Pancreas (tissue), 10 donors: ENCODE measurements at regions of chr1 and their contacts with region 1.

Region 1: DNA sequence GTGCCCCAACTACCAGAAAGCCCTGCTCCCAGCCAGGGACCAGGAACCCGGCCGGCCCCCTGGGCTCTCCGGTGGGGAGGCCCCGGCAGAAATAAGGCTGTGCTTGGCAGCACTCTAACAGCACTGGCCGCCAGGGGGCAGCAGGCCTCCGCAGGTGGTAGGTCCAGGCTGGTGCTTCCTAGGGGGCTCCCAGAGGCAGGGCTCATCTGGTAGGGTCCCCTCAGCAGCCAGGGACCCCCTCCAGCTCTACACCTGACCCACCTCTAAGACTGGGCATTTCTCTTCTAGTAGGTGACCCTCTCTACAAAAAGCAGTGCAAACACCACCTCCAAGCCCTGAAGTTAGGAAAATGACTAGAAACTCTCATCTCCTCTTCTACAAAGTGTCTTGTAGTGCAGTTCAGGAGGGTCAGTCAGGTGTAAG is 85.6 kb downstream of the STUM start:
- DNase-seq: peak; percentile 52 to 95 (median 77)
- ATAC-seq: peak; percentile 81 to 93 (median 90)
- H3K4me3 ChIP-seq: no peak overlapping the region
- H3K27ac ChIP-seq: no peak overlapping the region
- H3K4me1 ChIP-seq: no peaks in the 10 kb centered on the region
- H3K27me3 ChIP-seq: no peaks in the 10 kb centered on the region
- CTCF ChIP-seq: peak; percentile 86 to 91 (median 90)

Region 2: DNA sequence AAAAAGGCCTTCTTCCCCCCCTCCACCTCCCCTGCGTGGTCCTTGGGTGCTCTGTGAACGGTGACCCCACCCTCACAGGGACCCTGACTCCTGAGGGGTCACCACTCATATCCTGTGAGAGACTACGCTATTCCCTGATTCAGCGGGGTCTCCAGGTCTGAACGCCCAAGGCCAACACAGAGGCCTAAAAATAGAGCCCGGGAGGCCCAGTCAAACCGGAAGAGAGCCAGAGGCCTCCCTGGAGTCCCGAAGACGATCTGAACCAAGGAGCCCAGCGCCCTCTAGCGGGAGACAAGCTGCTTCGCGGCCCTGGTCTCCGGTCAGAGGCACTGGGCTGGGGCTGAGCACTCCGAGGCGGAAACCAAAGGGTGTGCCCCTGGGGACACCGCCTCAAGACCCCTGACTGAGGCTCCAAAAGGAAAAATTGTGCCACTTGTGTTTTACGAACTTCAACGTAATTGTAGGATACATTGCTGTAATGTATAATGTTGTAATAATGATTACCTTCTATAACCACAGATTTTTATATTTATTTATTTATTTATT is 193.9 kb after region 1 on chr1:
- intact Hi-C with region 1: loop called (anchors 2 to 10 kb)
- DNase-seq: peak; percentile 90 to 98 (median 96)
- ATAC-seq: peak; percentile 99 to 100 (median 100)
- H3K4me3 ChIP-seq: peak overlapping the region in 1 of 4 donors; percentile 4
- H3K27ac ChIP-seq: peak overlapping the region in 1 of 4 donors; percentile 31
- H3K4me1 ChIP-seq: no peaks in the 10 kb centered on the region
- H3K27me3 ChIP-seq: no peaks in the 10 kb centered on the region
- CTCF ChIP-seq: peak; percentile 91 to 95 (median 92)